CD4-positive, alpha-beta memory T cell (primary cell): ENCODE measurements at regions of chr17 and their contacts with region 1.

Region 1: DNA sequence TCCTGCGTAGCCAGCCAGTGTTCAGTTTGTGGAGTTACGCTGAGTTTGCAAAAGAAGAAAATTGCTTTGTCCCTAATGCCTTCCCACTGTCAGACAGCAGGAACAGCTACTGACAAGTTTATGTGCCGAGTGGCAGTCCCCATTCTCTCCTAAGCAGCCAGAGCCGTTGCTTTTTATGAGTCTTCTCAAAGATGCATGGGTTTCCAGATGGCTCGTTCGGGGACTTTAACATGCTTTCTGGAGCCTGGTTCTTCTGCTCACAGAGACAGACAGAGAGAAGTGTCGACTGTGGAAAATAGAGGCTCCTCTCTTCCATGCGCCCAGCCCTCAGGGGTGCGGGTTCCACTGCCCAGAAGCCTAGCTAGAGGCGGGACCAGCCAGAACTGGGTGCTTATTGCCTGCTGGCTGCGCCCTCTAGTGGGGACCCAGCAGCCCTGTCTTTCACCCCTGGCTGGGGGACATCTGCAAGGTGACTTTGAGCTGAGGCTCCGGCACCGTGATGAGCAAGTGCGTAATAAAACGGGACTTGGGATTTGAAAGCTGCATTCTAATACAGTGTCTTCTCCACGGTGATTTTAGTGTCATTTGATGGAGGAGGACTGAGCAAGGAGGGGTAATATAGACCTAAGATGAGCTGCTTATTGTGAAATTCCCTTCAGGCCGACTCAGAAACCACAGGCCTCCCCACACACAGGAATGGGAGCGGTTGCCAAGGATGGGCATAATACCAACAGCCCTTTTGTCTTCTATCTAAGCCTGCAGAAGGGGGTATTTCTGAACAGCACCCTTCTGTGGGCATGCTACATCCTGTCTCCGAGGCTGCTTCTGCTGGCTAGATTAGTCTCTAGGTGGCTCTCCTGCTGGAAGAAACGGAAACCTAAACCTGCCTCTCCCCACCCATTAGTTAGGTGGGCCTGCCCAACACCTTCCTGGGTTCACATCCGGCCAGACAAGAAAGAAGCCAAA is 73.1 kb downstream of the CCDC182 start:
- DNase-seq: peak; percentile 62 to 68 (median 67)
- H3K4me3 ChIP-seq: no peak overlapping the region
- H3K4me3 Mint-ChIP-seq: peak overlapping the region in 6 of 8 donors; percentile 16 to 71 (median 52)
- H3K27ac ChIP-seq: peak overlapping the region; percentile 10
- H3K27ac Mint-ChIP-seq: peak overlapping the region; percentile 14 to 86 (median 77)
- H3K4me1 ChIP-seq: peaks cover 19% of the 10 kb centered on the region
- H3K4me1 Mint-ChIP-seq: peaks cover 7 to 37% (median 20%) of the 10 kb centered on the region in 4 donors
- H3K27me3 ChIP-seq: no peaks in the 10 kb centered on the region
- H3K27me3 Mint-ChIP-seq: no peaks in the 10 kb centered on the region

Region 2: DNA sequence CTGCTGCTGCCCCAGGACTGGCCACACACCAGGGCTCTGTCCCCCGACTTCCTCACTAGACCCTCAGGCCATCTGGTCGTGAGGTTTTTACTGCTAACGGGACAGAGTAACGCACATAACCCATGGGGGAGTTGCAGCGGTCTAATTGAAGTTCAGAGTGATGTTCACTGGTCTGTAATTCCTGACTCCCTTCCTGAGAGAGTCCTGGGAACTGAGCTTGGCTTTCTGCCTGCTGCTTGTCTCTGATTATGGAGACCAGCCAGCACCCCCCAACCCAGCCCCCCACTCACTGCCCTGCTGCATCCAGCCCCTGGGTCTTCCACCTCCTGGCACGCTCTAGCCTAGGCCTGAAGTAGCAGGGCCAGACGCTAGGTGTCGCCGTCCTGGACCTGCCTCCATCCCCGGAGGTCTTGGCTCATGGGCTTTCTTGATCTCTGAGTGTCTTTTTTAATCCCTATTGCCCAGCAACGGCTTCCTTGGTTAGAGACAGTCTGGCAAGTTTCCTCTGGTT is 119.8 kb before region 1 on chr17:
- CTCF ChIA-PET with region 1: interaction called, 13 read pairs
- POLR2A ChIA-PET with region 1: no interaction called
- intact Hi-C with region 1: no loop called
- DNase-seq: no peak
- H3K4me3 ChIP-seq: no peak overlapping the region
- H3K4me3 Mint-ChIP-seq: peak overlapping the region in 1 of 8 donors; percentile 11
- H3K27ac ChIP-seq: no peak overlapping the region
- H3K27ac Mint-ChIP-seq: peak overlapping the region in 3 of 7 donors; percentile 17 to 64 (median 48)
- H3K4me1 ChIP-seq: no peaks in the 10 kb centered on the region
- H3K4me1 Mint-ChIP-seq: peaks cover 12 to 40% (median 15%) of the 10 kb centered on the region in 4 donors
- H3K27me3 ChIP-seq: no peaks in the 10 kb centered on the region
- H3K27me3 Mint-ChIP-seq: no peaks in the 10 kb centered on the region

Region 3: GRCh38 chr17:57604771-57605674 is 66.9 kb before region 1 on chr17:
- CTCF ChIA-PET with region 1: interaction called, 217 read pairs
- POLR2A ChIA-PET with region 1: interaction called, 30 read pairs
- intact Hi-C with region 1: no loop called
- DNase-seq: peak in 2 of 5 donors; percentile 6 to 64
- H3K4me3 ChIP-seq: peak overlapping the region in 1 of 2 donors; percentile 3
- H3K4me3 Mint-ChIP-seq: peak overlapping the region in 7 of 8 donors; percentile 72 to 86 (median 81)
- H3K27ac ChIP-seq: peak overlapping the region; percentile 69
- H3K27ac Mint-ChIP-seq: peak overlapping the region; percentile 86 to 99 (median 97)
- H3K4me1 ChIP-seq: peaks cover 87% of the 10 kb centered on the region
- H3K4me1 Mint-ChIP-seq: peaks cover 53 to 77% (median 67%) of the 10 kb centered on the region in 4 donors
- H3K27me3 ChIP-seq: no peaks in the 10 kb centered on the region
- H3K27me3 Mint-ChIP-seq: no peaks in the 10 kb centered on the region

Region 4: GRCh38 chr17:57685505-57686132 is 13.7 kb after region 1 on chr17:
- CTCF ChIA-PET with region 1: interaction called, 12 read pairs
- POLR2A ChIA-PET with region 1: no interaction called
- intact Hi-C with region 1: no loop called
- DNase-seq: no peak
- H3K4me3 ChIP-seq: no peak overlapping the region
- H3K4me3 Mint-ChIP-seq: no peak overlapping the region
- H3K27ac ChIP-seq: no peak overlapping the region
- H3K27ac Mint-ChIP-seq: no peak overlapping the region
- H3K4me1 ChIP-seq: no peaks in the 10 kb centered on the region
- H3K4me1 Mint-ChIP-seq: no peaks in the 10 kb centered on the region
- H3K27me3 ChIP-seq: no peaks in the 10 kb centered on the region
- H3K27me3 Mint-ChIP-seq: no peaks in the 10 kb centered on the region